ENCODE measurements at regions of chr22 and their contacts with region 1.

Region 1: DNA sequence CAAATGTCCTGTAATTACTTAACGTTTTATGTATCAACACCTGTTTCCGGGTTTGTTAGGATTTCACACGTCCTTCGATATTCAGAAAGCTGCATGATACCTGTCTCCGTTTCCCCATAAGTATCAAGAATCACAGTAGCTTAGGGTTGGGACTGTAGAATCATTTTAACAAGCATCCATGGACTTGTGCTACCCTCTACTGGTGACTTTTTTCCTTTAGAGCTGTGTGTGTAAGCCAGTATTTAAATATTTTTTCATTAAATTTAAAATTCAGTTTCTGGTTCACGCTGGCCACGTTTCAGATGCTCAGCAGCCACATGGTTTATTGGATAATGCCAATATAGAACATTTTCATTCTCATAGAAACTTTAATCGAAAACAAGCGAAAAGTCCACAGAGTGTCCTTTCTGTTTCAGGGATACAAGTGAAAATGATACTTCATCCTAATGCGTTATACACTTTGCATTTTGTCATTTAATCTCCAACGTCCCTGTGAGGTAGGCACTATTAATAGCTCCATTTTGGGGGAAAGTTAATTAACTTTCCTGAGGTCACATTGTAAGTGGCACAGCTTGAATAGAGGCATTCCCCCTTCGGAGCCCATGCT is 61.5 kb upstream of the SLC25A18 start:
- DNase-seq: peak; percentile 16
- H3K4me3 Mint-ChIP-seq: no peak overlapping the region
- H3K27ac Mint-ChIP-seq: no peak overlapping the region
- H3K4me1 Mint-ChIP-seq: no peaks in the 10 kb centered on the region
- H3K27me3 Mint-ChIP-seq: peaks cover 5% of the 10 kb centered on the region

Region 2: DNA sequence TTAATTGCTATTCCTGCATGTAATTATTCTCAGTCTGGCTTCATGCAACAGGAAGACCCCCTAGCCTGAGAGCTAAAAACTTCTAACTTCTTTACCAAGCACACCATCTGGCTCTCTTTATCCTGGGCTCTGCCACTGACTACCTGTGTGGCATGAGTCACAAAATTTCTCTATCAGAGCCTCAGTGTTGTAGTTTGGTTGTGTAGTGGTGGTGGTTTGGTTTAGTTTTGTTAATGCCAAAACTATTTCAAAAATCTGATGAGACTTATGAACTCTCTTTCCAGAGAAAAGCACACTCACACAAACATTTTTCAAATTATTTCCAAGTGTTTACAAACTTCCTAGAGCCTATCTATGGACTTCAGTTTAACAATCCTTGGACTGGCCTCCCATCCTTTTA is 424.5 kb before region 1 on chr22:
- CTCF ChIA-PET with region 1: interaction called, 47 read pairs
- POLR2A ChIA-PET with region 1: no interaction called
- DNase-seq: no peak
- H3K4me3 Mint-ChIP-seq: no peak overlapping the region
- H3K27ac Mint-ChIP-seq: no peak overlapping the region
- H3K4me1 Mint-ChIP-seq: peaks cover 18% of the 10 kb centered on the region
- H3K27me3 Mint-ChIP-seq: peaks cover 51% of the 10 kb centered on the region

Region 3: GRCh38 chr22:17205432-17205831 is 296.4 kb before region 1 on chr22:
- CTCF ChIA-PET with region 1: interaction called, 14 read pairs
- POLR2A ChIA-PET with region 1: no interaction called
- DNase-seq: no peak
- H3K4me3 Mint-ChIP-seq: no peak overlapping the region
- H3K27ac Mint-ChIP-seq: no peak overlapping the region
- H3K4me1 Mint-ChIP-seq: no peaks in the 10 kb centered on the region
- H3K27me3 Mint-ChIP-seq: no peaks in the 10 kb centered on the region

Region 4: DNA sequence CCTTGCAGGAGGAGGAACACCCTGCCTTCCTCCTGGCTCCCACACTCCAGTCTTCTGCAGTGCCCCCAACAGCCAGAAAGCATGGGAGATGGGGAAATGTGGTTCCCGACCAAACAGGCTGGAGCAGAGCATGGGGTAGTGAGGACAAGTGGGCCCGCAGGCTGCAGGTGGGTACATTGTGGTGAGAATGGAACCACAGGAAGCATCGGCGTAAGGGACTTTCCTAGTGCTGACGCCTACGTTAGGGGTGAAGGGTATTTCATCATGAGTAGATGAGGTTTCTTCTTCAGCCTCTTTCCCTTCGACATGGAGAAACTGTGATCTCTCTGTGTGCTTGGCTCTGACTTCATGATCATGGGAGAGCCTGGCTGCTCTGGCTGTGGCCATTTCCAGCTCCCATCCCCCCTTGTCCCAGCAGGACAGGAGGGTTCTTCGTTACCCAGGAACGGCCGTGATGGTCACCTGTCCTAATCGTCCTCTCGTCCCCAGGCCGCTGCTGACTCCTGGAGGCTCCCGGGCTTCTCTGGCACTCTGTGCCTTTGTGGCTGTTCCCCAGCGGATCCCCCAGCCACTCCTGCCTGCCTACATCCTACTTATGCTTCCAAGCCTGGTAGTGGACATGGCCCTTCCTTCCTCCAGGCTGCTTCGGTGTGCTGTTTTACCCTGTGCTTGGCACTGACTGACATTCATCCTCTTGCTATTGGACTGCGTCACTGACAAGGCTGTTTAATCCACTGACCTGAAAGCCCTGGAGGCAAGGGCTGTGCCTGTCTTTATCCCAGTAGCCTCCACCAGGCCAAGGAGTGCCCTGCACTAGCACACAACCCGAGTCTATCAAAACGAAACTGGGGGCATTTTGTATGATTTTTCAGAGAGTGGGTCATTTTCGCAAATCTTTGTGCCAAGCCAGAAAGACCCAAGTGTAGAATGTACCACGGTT is 197.7 kb before region 1 on chr22:
- CTCF ChIA-PET with region 1: no interaction called
- POLR2A ChIA-PET with region 1: no interaction called
- DNase-seq: peak; percentile 58
- H3K4me3 Mint-ChIP-seq: no peak overlapping the region
- H3K27ac Mint-ChIP-seq: peak overlapping the region; percentile 55
- H3K4me1 Mint-ChIP-seq: peaks cover 17% of the 10 kb centered on the region
- H3K27me3 Mint-ChIP-seq: no peaks in the 10 kb centered on the region

Region 5: GRCh38 chr22:17734187-17734586 is 232.4 kb after region 1 on chr22:
- CTCF ChIA-PET with region 1: no interaction called
- POLR2A ChIA-PET with region 1: no interaction called
- DNase-seq: peak; percentile 45
- H3K4me3 Mint-ChIP-seq: no peak overlapping the region
- H3K27ac Mint-ChIP-seq: peak overlapping the region; percentile 23
- H3K4me1 Mint-ChIP-seq: peaks cover 15% of the 10 kb centered on the region
- H3K27me3 Mint-ChIP-seq: no peaks in the 10 kb centered on the region